Naive thymus-derived CD4-positive, alpha-beta T cell (primary cell): ENCODE measurements at regions of chr1 and their contacts with region 1.

Region 1: GRCh38 chr1:200302192-200302920 is 107.5 kb downstream of the ZNF281 start:
- DNase-seq: peak; percentile 57 to 81 (median 74)
- ATAC-seq: peak; percentile 97
- H3K4me3 ChIP-seq: peak overlapping the region; percentile 95
- H3K4me3 Mint-ChIP-seq: peak overlapping the region; percentile 84 to 95 (median 94)
- H3K27ac ChIP-seq: peak overlapping the region; percentile 74
- H3K27ac Mint-ChIP-seq: peak overlapping the region; percentile 59 to 97 (median 93)
- H3K4me1 ChIP-seq: peaks cover 12 to 15% of the 10 kb centered on the region in 2 donors
- H3K4me1 Mint-ChIP-seq: peaks cover 4 to 42% (median 22%) of the 10 kb centered on the region in 7 donors
- H3K27me3 ChIP-seq: no peaks in the 10 kb centered on the region
- H3K27me3 Mint-ChIP-seq: peaks cover 0 to 37% (median 0%) of the 10 kb centered on the region in 5 donors

Region 2: GRCh38 chr1:200028586-200029034 is 273.7 kb before region 1 on chr1:
- CTCF ChIA-PET with region 1: no interaction called
- POLR2A ChIA-PET with region 1: no interaction called
- intact Hi-C with region 1: no loop called
- DNase-seq: no peak
- ATAC-seq: no peak
- H3K4me3 ChIP-seq: no peak overlapping the region
- H3K4me3 Mint-ChIP-seq: peak overlapping the region; percentile 48 to 81 (median 71)
- H3K27ac ChIP-seq: no peak overlapping the region
- H3K27ac Mint-ChIP-seq: no peak overlapping the region
- H3K4me1 ChIP-seq: peaks cover 0 to 4% of the 10 kb centered on the region in 2 donors
- H3K4me1 Mint-ChIP-seq: peaks cover 0 to 18% (median 7%) of the 10 kb centered on the region in 7 donors
- H3K27me3 ChIP-seq: peaks cover 3 to 9% of the 10 kb centered on the region in 2 donors
- H3K27me3 Mint-ChIP-seq: peaks cover 51 to 64% (median 52%) of the 10 kb centered on the region in 5 donors

Region 3: GRCh38 chr1:200090252-200091096 is 211.9 kb before region 1 on chr1:
- CTCF ChIA-PET with region 1: no interaction called
- POLR2A ChIA-PET with region 1: no interaction called
- intact Hi-C with region 1: loop called in 1 of 2 experiments (anchors 2 kb)
- DNase-seq: no peak
- ATAC-seq: no peak
- H3K4me3 ChIP-seq: no peak overlapping the region
- H3K4me3 Mint-ChIP-seq: no peak overlapping the region
- H3K27ac ChIP-seq: no peak overlapping the region
- H3K27ac Mint-ChIP-seq: no peak overlapping the region
- H3K4me1 ChIP-seq: no peaks in the 10 kb centered on the region
- H3K4me1 Mint-ChIP-seq: peaks cover 0 to 6% (median 0%) of the 10 kb centered on the region in 7 donors
- H3K27me3 ChIP-seq: no peaks in the 10 kb centered on the region
- H3K27me3 Mint-ChIP-seq: peaks cover 0 to 27% (median 16%) of the 10 kb centered on the region in 5 donors

Region 4: DNA sequence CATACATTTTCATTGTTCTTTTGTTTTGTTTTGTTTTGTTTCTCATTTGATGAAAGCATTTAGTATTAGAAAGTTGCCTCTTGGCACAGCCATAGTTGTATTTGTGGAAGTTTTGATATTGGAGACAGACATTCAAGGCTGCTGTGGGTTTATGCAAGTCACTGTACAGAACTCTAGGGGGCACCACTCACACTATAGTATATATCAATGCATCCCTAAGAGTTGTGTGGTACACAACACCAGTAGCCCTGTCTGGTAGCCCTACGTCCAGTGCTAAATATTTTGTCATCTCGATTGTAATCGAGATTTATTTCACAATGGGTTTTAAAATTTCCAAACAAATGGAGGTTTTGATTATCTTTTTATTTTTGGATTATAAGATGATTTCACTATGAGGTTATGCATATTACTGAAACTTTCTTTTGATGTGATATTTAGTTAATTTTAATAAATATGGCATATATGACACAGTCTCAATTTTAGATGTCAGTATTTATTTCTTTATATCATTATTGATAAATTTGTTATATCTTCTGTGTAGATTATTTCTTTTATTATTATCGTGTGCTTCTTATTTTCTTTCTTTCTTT is 162.6 kb before region 1 on chr1:
- CTCF ChIA-PET with region 1: interaction called, 8 read pairs
- POLR2A ChIA-PET with region 1: no interaction called
- intact Hi-C with region 1: loop called (anchors 1 kb)
- DNase-seq: peak in 7 of 9 donors; percentile 5 to 56 (median 23)
- ATAC-seq: peak; percentile 93
- H3K4me3 ChIP-seq: no peak overlapping the region
- H3K4me3 Mint-ChIP-seq: no peak overlapping the region
- H3K27ac ChIP-seq: no peak overlapping the region
- H3K27ac Mint-ChIP-seq: no peak overlapping the region
- H3K4me1 ChIP-seq: no peaks in the 10 kb centered on the region
- H3K4me1 Mint-ChIP-seq: peaks cover 0 to 8% (median 0%) of the 10 kb centered on the region in 7 donors
- H3K27me3 ChIP-seq: no peaks in the 10 kb centered on the region
- H3K27me3 Mint-ChIP-seq: peaks cover 0 to 12% (median 0%) of the 10 kb centered on the region in 5 donors

Region 5: DNA sequence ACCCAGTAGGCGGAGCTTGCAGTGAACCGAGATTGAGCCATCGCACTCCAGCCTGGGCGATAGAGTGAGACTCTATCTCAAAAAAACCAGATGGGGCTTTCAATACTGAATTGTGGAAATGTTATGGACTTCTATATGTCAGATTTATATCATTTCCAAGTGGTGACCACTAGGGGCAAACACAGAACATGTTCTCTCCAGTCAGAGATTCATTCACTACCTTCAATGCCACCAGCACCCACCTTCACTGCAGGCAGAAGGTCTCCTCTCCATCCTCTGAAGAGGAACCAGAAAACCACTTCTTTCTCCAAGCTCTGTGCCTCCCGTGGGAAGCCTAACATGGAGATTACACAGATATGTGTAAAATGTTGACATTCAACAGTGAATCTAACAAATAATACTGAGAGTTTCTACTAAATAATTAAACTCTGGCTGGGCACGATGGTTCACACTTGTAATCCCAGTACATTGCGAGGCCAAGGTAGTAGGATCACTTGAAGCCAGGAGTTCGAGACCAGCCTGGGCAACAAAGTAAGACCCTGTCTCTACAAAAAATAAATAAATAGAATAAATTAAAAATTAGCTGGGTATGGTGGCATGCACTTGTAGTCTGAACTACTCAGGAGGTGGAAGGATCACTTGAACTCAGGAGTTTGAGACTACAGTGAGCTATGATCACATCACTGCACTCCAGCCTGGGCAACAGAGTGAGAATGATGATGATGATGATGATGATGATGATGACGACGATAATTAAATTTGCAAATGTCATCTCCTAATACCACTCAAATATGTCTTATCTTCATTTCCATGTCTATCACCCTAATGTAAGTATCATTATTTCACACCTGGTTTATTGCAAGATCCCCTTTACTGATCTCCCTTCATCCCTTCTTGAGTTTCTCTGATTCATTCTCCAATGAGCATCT is 43.6 kb before region 1 on chr1:
- CTCF ChIA-PET with region 1: interaction called, 4 read pairs
- POLR2A ChIA-PET with region 1: no interaction called
- intact Hi-C with region 1: loop called in 1 of 2 experiments (anchors 1 kb)
- DNase-seq: peak in 5 of 9 donors; percentile 6 to 27 (median 9)
- ATAC-seq: peak; percentile 61
- H3K4me3 ChIP-seq: no peak overlapping the region
- H3K4me3 Mint-ChIP-seq: no peak overlapping the region
- H3K27ac ChIP-seq: no peak overlapping the region
- H3K27ac Mint-ChIP-seq: no peak overlapping the region
- H3K4me1 ChIP-seq: no peaks in the 10 kb centered on the region
- H3K4me1 Mint-ChIP-seq: peaks cover 0 to 13% (median 0%) of the 10 kb centered on the region in 7 donors
- H3K27me3 ChIP-seq: no peaks in the 10 kb centered on the region
- H3K27me3 Mint-ChIP-seq: peaks cover 0 to 10% (median 0%) of the 10 kb centered on the region in 5 donors

Region 6: GRCh38 chr1:200351826-200352549 is 49.6 kb after region 1 on chr1:
- CTCF ChIA-PET with region 1: no interaction called
- POLR2A ChIA-PET with region 1: no interaction called
- intact Hi-C with region 1: loop called in 1 of 2 experiments (anchors 2 kb)
- DNase-seq: peak in 7 of 9 donors; percentile 14 to 49 (median 39)
- ATAC-seq: peak; percentile 77
- H3K4me3 ChIP-seq: peak overlapping the region; percentile 41
- H3K4me3 Mint-ChIP-seq: peak overlapping the region; percentile 65 to 88 (median 82)
- H3K27ac ChIP-seq: peak overlapping the region; percentile 43
- H3K27ac Mint-ChIP-seq: peak overlapping the region; percentile 80 to 95 (median 91)
- H3K4me1 ChIP-seq: peaks cover 8 to 16% of the 10 kb centered on the region in 2 donors
- H3K4me1 Mint-ChIP-seq: peaks cover 21 to 45% (median 31%) of the 10 kb centered on the region in 7 donors
- H3K27me3 ChIP-seq: no peaks in the 10 kb centered on the region
- H3K27me3 Mint-ChIP-seq: no peaks in the 10 kb centered on the region

Region 7: GRCh38 chr1:200588698-200589097 is 286.3 kb after region 1 on chr1:
- CTCF ChIA-PET with region 1: no interaction called
- POLR2A ChIA-PET with region 1: no interaction called
- intact Hi-C with region 1: no loop called
- DNase-seq: no peak
- ATAC-seq: peak; percentile 87
- H3K4me3 ChIP-seq: no peak overlapping the region
- H3K4me3 Mint-ChIP-seq: no peak overlapping the region
- H3K27ac ChIP-seq: no peak overlapping the region
- H3K27ac Mint-ChIP-seq: no peak overlapping the region
- H3K4me1 ChIP-seq: no peaks in the 10 kb centered on the region
- H3K4me1 Mint-ChIP-seq: peaks cover 0 to 4% (median 0%) of the 10 kb centered on the region in 7 donors
- H3K27me3 ChIP-seq: no peaks in the 10 kb centered on the region
- H3K27me3 Mint-ChIP-seq: no peaks in the 10 kb centered on the region